Vagina (tissue), 2 donors: ENCODE measurements at regions of chr11 and their contacts with region 1.

Region 1: DNA sequence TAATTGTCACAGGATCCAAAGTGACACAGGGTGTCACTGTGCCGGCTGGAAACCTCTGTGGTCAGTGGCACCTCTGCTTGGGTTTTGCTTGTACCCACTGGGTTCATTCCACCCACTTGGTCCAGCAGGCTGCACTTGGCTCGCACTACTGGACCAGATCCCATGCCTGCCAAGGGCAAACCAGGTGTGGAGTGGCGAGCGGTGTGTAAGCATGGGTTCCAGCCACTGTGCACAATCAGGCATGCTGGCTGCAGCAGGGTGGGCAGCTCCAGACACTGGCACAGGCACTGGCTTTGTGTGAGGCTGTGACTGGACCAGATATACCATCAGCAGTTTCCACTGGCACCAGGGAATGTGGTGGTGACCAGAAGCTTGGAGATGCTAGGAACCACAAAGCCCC is 261.4 kb downstream of the KCNA4 start:
- DNase-seq: no peak
- H3K4me3 ChIP-seq: no peak overlapping the region
- H3K27ac ChIP-seq: no peak overlapping the region
- H3K4me1 ChIP-seq: no peaks in the 10 kb centered on the region
- H3K27me3 ChIP-seq: no peaks in the 10 kb centered on the region
- CTCF ChIP-seq: no peak
- POLR2A ChIP-seq: no peak

Region 2: GRCh38 chr11:28481616-28482480 is 1273.6 kb before region 1 on chr11:
- intact Hi-C with region 1: loop called (anchors 5 kb)
- DNase-seq: no peak
- H3K4me3 ChIP-seq: no peak overlapping the region
- H3K27ac ChIP-seq: no peak overlapping the region
- H3K4me1 ChIP-seq: no peaks in the 10 kb centered on the region
- H3K27me3 ChIP-seq: no peaks in the 10 kb centered on the region
- CTCF ChIP-seq: no peak
- POLR2A ChIP-seq: no peak